ENCODE measurements at regions of chr9 and their contacts with region 1.

Region 1: DNA sequence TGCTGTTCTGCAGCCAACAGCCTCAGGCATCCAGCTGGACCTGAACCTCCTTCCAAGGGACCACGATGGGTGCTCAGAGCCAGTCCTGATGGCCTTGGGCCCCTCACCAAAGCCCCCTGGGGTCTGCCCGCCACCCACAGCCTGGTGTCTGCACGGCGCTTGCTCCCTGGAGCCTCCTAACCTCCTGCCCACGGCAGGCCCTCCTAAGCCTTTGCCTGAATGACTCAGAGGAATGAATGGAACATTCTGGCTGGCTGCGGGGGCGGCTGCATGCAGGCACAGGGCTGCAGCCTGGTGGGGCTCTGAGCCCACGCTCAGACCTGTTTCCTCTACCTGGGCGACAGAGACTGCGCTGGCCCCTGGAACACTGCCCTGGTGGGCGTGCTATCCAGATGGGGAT is 6.9 kb downstream of the SOHLH1 start:
- DNase-seq: peak; percentile 57
- H3K4me3 ChIP-seq: no peak overlapping the region
- H3K27ac ChIP-seq: no peak overlapping the region
- H3K4me1 ChIP-seq: peaks cover 11% of the 10 kb centered on the region
- H3K27me3 ChIP-seq: no peaks in the 10 kb centered on the region
- CTCF ChIP-seq: no peak

Region 2: DNA sequence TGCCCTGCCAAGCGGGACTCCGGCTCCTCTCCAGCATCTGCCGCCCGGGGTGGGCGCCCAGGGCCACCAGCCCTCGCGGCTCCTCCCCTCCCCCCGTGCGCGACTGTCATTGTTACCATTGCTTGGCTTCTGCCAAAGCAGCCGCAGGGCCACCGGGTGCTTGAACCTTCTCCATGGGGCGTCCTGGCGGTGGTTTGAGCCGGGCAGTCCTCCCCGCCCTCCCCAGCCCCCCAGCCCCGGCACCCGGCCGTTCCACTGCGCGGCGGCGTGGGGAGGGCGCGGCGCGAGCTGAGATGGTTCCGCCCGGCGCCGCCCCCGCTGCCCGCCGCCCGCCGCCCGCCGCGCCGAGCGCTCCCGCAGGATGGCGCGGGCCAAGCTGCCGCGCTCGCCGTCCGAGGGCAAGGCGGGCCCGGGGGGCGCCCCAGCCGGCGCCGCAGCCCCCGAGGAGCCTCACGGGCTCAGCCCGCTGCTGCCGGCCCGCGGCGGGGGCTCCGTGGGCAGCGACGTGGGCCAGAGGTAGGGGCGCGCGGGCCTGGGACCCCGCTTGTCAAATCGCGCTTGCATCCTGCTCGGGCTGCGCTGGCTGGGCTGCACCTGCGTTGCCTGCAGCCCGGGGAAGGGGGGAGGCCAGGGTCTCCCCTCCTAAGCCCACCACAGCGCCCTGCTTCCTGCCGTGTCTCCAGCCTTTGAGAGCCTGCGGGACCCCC is 44.0 kb after region 1 on chr9:
- CTCF ChIA-PET with region 1: no interaction called
- dilution Hi-C with region 1: no loop called
- in situ Hi-C with region 1: no loop called
- intact Hi-C with region 1: no loop called
- DNase-seq: no peak
- H3K4me3 ChIP-seq: no peak overlapping the region
- H3K27ac ChIP-seq: no peak overlapping the region
- H3K4me1 ChIP-seq: no peaks in the 10 kb centered on the region
- H3K27me3 ChIP-seq: peaks cover 15% of the 10 kb centered on the region
- CTCF ChIP-seq: no peak

Region 3: DNA sequence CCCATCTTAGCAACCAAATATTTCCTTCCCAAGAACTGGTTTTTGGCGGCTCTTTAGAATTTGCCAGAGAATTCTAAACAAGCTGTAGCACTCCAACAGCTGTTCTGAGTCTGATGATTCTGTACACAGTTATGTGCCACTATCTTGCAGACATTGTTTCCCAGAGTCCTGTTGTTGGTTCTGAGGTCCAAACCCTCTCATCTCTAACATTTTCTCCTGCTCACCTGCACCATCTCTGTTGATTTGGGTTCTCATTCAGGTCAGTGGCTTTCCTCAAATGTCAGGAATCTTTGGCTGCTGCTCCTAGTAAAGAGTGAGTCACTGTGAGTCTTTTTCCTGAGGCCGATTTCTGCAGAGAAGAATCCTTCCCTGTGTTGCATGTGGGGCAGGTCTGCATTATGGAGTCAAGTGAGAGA is 165.0 kb after region 1 on chr9:
- CTCF ChIA-PET with region 1: no interaction called
- dilution Hi-C with region 1: loop called (anchors 10 kb)
- in situ Hi-C with region 1: no loop called
- intact Hi-C with region 1: no loop called
- DNase-seq: peak; percentile 76
- H3K4me3 ChIP-seq: no peak overlapping the region
- H3K27ac ChIP-seq: no peak overlapping the region
- H3K4me1 ChIP-seq: peaks cover 20% of the 10 kb centered on the region
- H3K27me3 ChIP-seq: no peaks in the 10 kb centered on the region
- CTCF ChIP-seq: no peak